Panc1 (cell line): ENCODE measurements at regions of chr17 and their contacts with region 1.

Region 1: GRCh38 chr17:36066365-36066985 is 2.4 kb downstream of the CCL18 start:
- DNase-seq: no peak
- ATAC-seq: no peak
- H3K4me3 ChIP-seq: no peak overlapping the region
- H3K27ac ChIP-seq: no peak overlapping the region
- H3K4me1 ChIP-seq: no peaks in the 10 kb centered on the region
- H3K27me3 ChIP-seq: peaks cover 5% of the 10 kb centered on the region
- CTCF ChIP-seq: no peak

Region 2: GRCh38 chr17:35841505-35841904 is 225.0 kb before region 1 on chr17:
- CTCF ChIA-PET with region 1: no interaction called
- POLR2A ChIA-PET with region 1: interaction called, 11 read pairs
- in situ Hi-C with region 1: no loop called
- intact Hi-C with region 1: no loop called
- DNase-seq: no peak
- ATAC-seq: no peak
- H3K4me3 ChIP-seq: no peak overlapping the region
- H3K27ac ChIP-seq: no peak overlapping the region
- H3K4me1 ChIP-seq: no peaks in the 10 kb centered on the region
- H3K27me3 ChIP-seq: no peaks in the 10 kb centered on the region
- CTCF ChIP-seq: no peak

Region 3: GRCh38 chr17:35889818-35890763 is 176.4 kb before region 1 on chr17:
- CTCF ChIA-PET with region 1: interaction called, 10 read pairs
- POLR2A ChIA-PET with region 1: no interaction called
- in situ Hi-C with region 1: no loop called
- intact Hi-C with region 1: no loop called
- DNase-seq: no peak
- ATAC-seq: peak; percentile 65; the same call in 1 of the 2 replicates
- H3K4me3 ChIP-seq: no peak overlapping the region
- H3K27ac ChIP-seq: no peak overlapping the region
- H3K4me1 ChIP-seq: peaks cover 7% of the 10 kb centered on the region; the same call in 1 of the 2 replicates
- H3K27me3 ChIP-seq: no peaks in the 10 kb centered on the region
- CTCF ChIP-seq: no peak

Region 4: GRCh38 chr17:36008998-36009665 is 57.3 kb before region 1 on chr17:
- CTCF ChIA-PET with region 1: no interaction called
- POLR2A ChIA-PET with region 1: no interaction called
- in situ Hi-C with region 1: no loop called
- intact Hi-C with region 1: no loop called
- DNase-seq: no peak
- ATAC-seq: no peak
- H3K4me3 ChIP-seq: no peak overlapping the region
- H3K27ac ChIP-seq: no peak overlapping the region
- H3K4me1 ChIP-seq: no peaks in the 10 kb centered on the region
- H3K27me3 ChIP-seq: peaks cover 6% of the 10 kb centered on the region; the same call in 1 of the 2 replicates
- CTCF ChIP-seq: peak; percentile 73

Region 5: GRCh38 chr17:36089888-36090836 is 23.7 kb after region 1 on chr17 and contains the start of gene CCL3:
- CTCF ChIA-PET with region 1: no interaction called
- POLR2A ChIA-PET with region 1: no interaction called
- in situ Hi-C with region 1: no loop called
- intact Hi-C with region 1: no loop called
- DNase-seq: no peak
- ATAC-seq: no peak
- H3K4me3 ChIP-seq: no peak within 1 kb of the TSS
- H3K27ac ChIP-seq: no peak within 1 kb of the TSS
- H3K4me1 ChIP-seq: no peaks in the 10 kb centered on the region
- H3K27me3 ChIP-seq: no peaks in the 10 kb centered on the region; the same call in 1 of the 2 replicates
- CTCF ChIP-seq: no peak
- total RNA-seq, gene CCL3: 1.1 TPM